Cardiac septum (tissue), 1 donor: ENCODE measurements at regions of chr3 and their contacts with region 1.

Region 1: GRCh38 chr3:124887177-124887931 is at the start of gene ITGB5:
- DNase-seq: peak; percentile 87
- total RNA-seq, gene ITGB5: 180 TPM

Region 2: GRCh38 chr3:124768812-124769211 is 118.5 kb before region 1 on chr3:
- intact Hi-C with region 1: loop called (anchors 5 kb)
- DNase-seq: no peak

Region 3: GRCh38 chr3:124786441-124787241 is 100.7 kb before region 1 on chr3:
- intact Hi-C with region 1: loop called (anchors 5 kb)
- DNase-seq: no peak

Region 4: GRCh38 chr3:124812291-124813265 is 74.8 kb before region 1 on chr3:
- intact Hi-C with region 1: loop called (anchors 5 kb)
- DNase-seq: peak; percentile 83

Region 5: DNA sequence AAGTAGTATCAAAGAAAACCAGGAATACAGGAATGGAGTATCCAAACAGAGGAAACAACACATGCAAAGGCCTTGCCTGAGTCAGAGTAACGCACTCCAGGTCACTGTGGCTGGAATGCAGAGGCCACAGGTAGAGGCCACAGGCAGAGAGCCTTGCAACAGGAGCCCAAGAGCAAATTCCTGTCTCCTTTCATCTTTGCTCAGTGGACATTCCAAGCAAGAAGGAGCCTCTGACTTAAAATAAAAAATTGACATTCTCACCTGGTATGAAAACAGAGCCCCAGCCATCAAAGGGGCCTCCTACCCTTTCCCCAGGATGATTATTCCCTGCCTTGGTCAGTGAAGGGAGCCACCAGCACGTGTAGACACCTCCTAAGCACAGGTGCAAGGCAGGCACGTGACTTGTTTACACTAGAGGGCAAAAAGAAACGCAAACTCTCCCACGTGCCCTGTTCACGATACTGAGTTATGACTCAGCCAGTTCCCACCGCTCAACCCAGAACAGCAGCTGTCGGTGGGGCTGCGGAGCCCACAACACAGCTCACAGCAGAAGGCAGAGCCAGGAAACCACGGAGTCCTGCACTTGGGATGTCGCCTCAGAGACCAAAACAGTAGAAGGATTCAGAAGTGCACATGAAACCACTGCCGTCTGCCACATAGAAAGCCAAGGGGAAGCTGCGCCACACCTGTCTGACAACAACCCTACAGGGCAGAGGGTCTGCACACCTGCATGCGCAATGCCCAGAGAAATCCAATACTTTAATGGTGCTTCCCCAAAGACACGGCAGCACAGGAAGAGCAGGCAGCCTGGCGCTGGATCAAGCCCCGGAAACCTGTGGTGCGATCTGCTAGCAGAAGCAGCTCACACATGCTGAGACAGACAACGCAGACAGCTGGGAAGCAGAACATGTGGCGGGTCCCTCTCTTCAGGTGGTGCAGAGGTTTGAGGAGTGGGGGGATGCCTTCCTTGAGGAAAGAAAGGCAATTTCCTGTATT is 52.3 kb before region 1 on chr3:
- intact Hi-C with region 1: loop called (anchors 2 kb)
- DNase-seq: no peak